Heart right ventricle (tissue), 16 donors: ENCODE measurements at regions of chr1 and their contacts with region 1.

Region 1: DNA sequence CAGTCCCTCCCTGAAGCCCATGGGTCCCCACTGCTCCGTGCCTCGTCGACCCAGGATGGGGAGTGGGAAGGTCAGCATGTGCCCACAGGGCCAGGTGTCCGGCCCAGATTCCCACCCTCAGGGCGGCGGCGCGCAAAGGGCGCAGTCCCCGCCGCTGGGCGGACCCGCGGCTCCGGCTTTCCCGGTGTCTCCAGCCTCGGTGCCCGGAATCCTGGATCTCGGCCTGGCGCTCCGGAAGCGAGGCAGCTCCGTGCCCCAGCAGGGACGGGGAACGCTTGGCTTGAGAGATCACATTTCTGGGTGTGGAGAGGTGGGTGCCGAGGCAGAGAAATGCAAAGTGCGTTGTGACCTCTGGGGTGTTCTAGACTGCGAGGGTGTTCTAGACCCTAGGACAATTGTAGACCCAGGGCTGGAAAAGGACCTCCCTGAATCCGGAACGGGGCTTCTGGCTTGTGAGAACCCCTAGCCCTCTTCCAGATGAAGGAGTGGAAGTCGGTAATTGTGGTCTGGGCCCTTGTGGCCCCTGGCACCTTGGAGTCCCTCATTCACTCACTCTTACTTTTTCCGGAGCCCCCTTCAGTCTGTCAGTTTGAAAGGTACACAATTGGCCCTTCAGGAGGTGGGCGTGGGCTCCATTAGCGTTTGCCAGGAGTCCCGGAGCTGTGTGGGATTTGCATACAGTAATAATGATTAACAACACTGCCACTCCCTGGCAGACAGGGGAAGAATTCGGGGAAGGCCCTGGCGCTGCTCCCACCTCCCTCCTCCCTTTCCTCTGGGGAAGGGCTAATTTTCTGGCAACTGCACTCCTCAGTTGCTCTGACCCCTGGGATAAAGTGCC is 1.6 kb upstream of the KCND3 start:
- DNase-seq: peak; percentile 77
- ATAC-seq: peak; percentile 60 to 83 (median 76)
- H3K4me3 ChIP-seq: peak overlapping the region; percentile 25 to 70 (median 62)
- H3K27ac ChIP-seq: peak overlapping the region; percentile 36 to 91 (median 79)
- H3K4me1 ChIP-seq: peaks cover 6 to 59% (median 35%) of the 10 kb centered on the region in 9 donors
- H3K27me3 ChIP-seq: peaks cover 0 to 68% (median 14%) of the 10 kb centered on the region in 7 donors
- CTCF ChIP-seq: peak in 8 of 9 donors; percentile 15 to 67 (median 39)

Region 2: DNA sequence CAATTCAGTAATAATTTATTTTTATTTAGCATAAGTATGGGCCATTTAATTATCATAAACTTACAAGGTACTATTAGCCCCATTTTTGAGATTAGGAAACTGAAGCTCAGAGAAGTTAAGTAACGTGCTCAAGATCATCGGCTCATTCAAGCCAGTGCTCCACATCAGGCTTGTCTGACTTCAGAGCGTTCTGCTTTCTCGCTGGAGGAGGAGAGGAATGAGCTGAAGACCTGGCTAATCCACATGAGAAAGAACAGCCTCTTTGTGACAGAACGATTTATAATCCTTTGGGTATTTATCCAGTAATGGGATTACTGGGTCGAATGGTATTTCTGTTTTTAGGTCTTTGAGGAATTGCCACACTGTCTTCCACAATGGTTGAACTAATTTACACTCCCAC is 195.7 kb before region 1 on chr1:
- intact Hi-C with region 1: loop called in 9 of 10 experiments (anchors 2 to 10 kb)
- DNase-seq: no peak
- ATAC-seq: no peak
- H3K4me3 ChIP-seq: no peak overlapping the region
- H3K27ac ChIP-seq: no peak overlapping the region
- H3K4me1 ChIP-seq: peaks cover 0 to 10% (median under 1%) of the 10 kb centered on the region in 9 donors
- H3K27me3 ChIP-seq: no peaks in the 10 kb centered on the region
- CTCF ChIP-seq: no peak

Region 3: DNA sequence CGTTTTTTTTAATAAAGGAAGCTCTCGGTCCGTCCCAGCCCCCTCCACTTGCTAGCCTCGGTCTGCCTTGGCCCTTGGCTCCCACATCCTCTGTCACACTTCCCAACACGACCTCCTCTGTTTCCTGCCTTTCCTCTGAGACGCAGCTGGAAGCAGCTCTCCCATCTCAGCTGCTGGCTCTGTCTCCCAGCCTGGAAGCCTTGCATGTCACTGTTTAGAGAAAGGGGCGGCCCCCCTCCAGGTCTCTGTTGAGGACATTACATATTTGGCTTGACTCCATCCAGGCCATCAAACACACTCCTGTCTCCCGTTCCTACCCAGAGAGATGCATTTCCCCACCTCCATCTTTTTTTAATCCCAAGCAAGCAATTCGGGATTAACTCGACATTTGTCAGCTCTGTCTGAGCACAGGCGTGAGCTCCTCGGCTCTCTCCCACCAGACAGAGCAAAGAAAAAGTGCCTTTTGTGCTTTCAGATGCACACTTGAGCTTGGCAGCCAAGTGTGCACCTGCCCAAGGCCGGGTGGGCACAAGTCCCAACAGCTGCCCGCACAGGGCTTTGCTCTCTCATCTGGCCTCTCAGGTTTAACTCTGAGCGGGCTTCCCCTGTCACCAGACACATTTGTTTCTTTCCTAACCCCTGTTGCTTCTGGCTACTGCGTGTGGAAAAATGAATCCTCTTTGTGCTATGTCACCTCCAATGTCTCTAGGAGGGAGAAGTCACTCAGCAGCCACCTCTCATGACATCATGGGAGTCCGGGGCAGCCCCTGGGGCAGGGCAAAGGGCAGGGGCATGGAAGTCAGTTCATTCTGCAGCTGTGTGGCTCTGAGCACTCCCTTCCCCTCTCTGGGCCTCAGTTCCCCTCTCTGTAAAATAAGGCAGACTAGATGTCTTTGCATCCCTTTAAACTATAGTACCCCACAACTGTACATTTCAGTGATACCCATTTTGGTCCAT is 109.9 kb before region 1 on chr1:
- intact Hi-C with region 1: loop called in 1 of 10 experiments (anchors 5 kb)
- DNase-seq: peak; percentile 41 to 52
- ATAC-seq: peak; percentile 40 to 74 (median 62)
- H3K4me3 ChIP-seq: no peak overlapping the region
- H3K27ac ChIP-seq: peak overlapping the region in 3 of 10 donors; percentile 8 to 41 (median 13)
- H3K4me1 ChIP-seq: peaks cover 7 to 66% (median 35%) of the 10 kb centered on the region in 9 donors
- H3K27me3 ChIP-seq: peaks cover 0 to 6% (median 0%) of the 10 kb centered on the region in 7 donors
- CTCF ChIP-seq: no peak

Region 4: DNA sequence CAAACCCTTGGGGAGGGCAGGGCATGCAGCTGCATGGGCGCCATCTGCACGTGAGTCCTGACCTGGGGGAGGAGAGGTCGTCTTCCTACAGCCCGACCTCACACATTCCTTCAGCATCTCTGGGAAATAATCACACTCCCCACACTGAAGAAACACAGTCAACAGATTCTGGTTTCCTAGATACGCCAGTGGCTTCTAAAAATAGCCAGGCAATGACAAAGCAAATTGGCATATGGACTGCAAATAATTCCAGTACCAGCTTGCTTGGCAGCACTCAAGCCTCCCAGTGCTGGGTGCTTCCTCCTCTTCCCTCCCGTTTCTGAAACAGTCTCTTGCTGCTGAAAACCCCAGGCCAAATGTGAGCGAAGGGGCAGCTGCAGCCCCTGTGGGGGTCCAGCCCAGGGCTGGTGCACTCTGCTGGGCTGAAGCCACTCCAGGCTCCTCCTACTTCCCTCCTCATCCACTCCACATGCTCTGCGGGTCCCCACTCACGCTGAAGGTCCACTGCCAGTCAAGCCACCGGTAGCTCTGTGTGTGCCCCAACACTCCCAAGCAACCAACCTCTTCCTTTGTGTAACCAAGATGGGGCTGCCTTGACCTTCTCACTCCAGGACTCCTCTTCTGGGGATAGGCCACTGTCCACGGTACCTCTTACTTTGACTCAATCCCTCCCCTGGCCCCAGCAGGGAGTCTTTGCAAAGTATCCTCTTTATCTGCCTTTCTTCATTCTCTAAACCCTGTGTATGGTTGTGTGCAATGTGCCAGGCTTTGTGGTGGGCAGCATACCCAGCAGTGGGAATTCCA is 70.7 kb before region 1 on chr1:
- intact Hi-C with region 1: loop called in 1 of 10 experiments (anchors 10 kb)
- DNase-seq: peak in 1 of 2 donors; percentile 45
- ATAC-seq: peak; percentile 80 to 95 (median 90)
- H3K4me3 ChIP-seq: no peak overlapping the region
- H3K27ac ChIP-seq: peak overlapping the region; percentile 29 to 89 (median 76)
- H3K4me1 ChIP-seq: peaks cover 6 to 37% (median 22%) of the 10 kb centered on the region in 9 donors
- H3K27me3 ChIP-seq: no peaks in the 10 kb centered on the region
- CTCF ChIP-seq: no peak

Region 5: GRCh38 chr1:112144733-112145426 is 153.8 kb after region 1 on chr1:
- intact Hi-C with region 1: loop called in 3 of 10 experiments (anchors 5 to 10 kb)
- DNase-seq: peak; percentile 18 to 32
- ATAC-seq: peak; percentile 86 to 97 (median 91)
- H3K4me3 ChIP-seq: no peak overlapping the region
- H3K27ac ChIP-seq: peak overlapping the region in 9 of 10 donors; percentile 20 to 74 (median 60)
- H3K4me1 ChIP-seq: peaks cover 0 to 40% (median 9%) of the 10 kb centered on the region in 9 donors
- H3K27me3 ChIP-seq: no peaks in the 10 kb centered on the region
- CTCF ChIP-seq: no peak